ENCODE measurements at regions of chr3 and their contacts with region 1.

Region 1: GRCh38 chr3:193788189-193788991 is 195.4 kb downstream of the OPA1 start:
- DNase-seq: peak; percentile 64 to 77 (median 76)
- ATAC-seq: peak; percentile 88
- H3K4me3 ChIP-seq: no peak overlapping the region
- H3K27ac ChIP-seq: no peak overlapping the region
- H3K4me1 ChIP-seq: peaks cover 45% of the 10 kb centered on the region
- H3K27me3 ChIP-seq: no peaks in the 10 kb centered on the region
- CTCF ChIP-seq: peak; percentile 67 to 88 (median 81)
- POLR2A ChIP-seq: no peak

Region 2: DNA sequence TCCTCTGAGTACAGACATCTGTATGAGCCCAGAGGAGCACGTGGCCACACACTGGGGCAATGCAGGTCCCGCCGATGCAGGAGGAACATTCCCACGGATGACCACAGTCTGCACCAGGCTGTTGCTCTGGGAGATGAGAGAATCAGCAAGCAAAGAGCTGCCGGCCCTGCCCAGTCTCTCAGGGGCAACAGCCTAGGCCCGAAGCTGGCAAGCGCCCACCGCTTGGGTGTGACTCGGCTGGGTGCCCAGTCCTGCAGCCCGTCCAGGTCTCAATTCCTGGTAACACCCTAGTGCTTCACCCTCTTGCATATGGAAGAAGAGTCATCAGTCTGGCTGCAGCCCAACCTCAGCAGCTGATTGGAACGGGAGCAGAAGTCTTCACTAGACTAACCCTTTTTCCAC is 193.9 kb after region 1 on chr3:
- intact Hi-C with region 1: loop called (anchors 10 kb)
- DNase-seq: peak in 3 of 4 donors; percentile 22 to 42 (median 25)
- ATAC-seq: peak; percentile 30
- H3K4me3 ChIP-seq: no peak overlapping the region
- H3K27ac ChIP-seq: no peak overlapping the region
- H3K4me1 ChIP-seq: no peaks in the 10 kb centered on the region
- H3K27me3 ChIP-seq: no peaks in the 10 kb centered on the region
- CTCF ChIP-seq: no peak
- POLR2A ChIP-seq: no peak

Region 3: GRCh38 chr3:194129581-194130133 is 341.3 kb after region 1 on chr3:
- intact Hi-C with region 1: loop called (anchors 10 kb)
- DNase-seq: peak in 3 of 4 donors; percentile 49 to 65 (median 57)
- ATAC-seq: no peak
- H3K4me3 ChIP-seq: no peak overlapping the region
- H3K27ac ChIP-seq: peak overlapping the region in 3 of 4 donors; percentile 74 to 84 (median 84)
- H3K4me1 ChIP-seq: peaks cover 51% of the 10 kb centered on the region
- H3K27me3 ChIP-seq: no peaks in the 10 kb centered on the region
- CTCF ChIP-seq: no peak
- POLR2A ChIP-seq: no peak

Region 4: GRCh38 chr3:194312743-194313281 is 524.4 kb after region 1 on chr3:
- intact Hi-C with region 1: loop called (anchors 5 kb)
- DNase-seq: peak in 2 of 4 donors; percentile 42 to 58
- ATAC-seq: peak; percentile 22
- H3K4me3 ChIP-seq: no peak overlapping the region
- H3K27ac ChIP-seq: peak overlapping the region in 2 of 4 donors; percentile 36 to 56
- H3K4me1 ChIP-seq: peaks cover 36% of the 10 kb centered on the region
- H3K27me3 ChIP-seq: no peaks in the 10 kb centered on the region
- CTCF ChIP-seq: no peak
- POLR2A ChIP-seq: no peak